WTC11 (cell line): ENCODE measurements at regions of chr19 and their contacts with region 1.

Region 1: GRCh38 chr19:49473868-49474544 is at the start of gene FLT3LG:
- DNase-seq: peak; percentile 67
- ATAC-seq: no peak
- H3K4me3 Mint-ChIP-seq: peak within 1 kb of the TSS; percentile 67
- H3K27ac Mint-ChIP-seq: no peak within 1 kb of the TSS
- H3K4me1 Mint-ChIP-seq: peaks cover 12% of the 10 kb centered on the region
- H3K27me3 Mint-ChIP-seq: peaks cover 17% of the 10 kb centered on the region
- CTCF ChIP-seq: peak; percentile 96
- total RNA-seq, gene FLT3LG: 2.9 to 5.3 TPM (median 3.6 TPM) in 3 replicates

Region 2: DNA sequence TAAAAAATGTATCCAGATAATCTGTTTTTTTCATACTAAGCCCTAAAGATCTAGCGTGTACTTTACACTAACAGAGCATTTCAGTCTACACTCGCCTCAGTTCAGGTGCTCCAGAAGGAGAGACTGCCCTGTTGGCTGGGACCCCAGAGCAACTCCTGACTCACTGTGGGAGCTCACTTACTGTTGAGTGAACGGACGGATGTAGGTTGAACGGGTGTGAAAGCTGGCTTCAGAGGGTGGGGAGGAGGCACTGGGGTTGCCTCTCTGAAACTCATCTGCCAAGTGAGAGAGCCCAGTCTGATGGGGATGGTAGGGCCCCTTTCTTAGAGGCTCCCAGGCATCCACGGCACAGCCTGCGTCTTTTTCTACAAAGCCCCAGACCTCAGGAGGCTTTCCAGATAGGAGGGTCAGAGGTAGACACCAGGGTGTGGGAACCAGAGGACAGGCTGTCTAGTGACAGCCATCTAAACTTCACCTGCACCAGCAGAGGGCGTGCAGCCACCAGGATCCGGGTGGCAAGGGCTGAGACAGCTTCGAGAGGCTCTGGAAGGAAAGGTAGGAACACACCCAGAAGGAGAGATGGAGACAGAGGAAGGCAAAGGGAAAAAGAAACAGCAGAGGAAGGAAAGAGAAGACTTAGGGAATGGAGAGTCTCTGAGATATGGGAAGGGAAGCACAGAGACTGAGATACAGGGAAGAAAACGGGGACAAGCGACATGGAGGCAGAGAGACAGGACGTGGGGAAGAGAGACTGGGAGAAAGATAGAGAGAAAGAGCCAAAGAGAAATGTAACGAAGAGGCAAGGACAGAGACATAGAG is 82.2 kb before region 1 on chr19:
- CTCF ChIA-PET with region 1: interaction called, 10 read pairs
- POLR2A ChIA-PET with region 1: interaction called, 5 read pairs
- DNase-seq: peak; percentile 87
- ATAC-seq: peak; percentile 91
- H3K4me3 Mint-ChIP-seq: no peak overlapping the region
- H3K27ac Mint-ChIP-seq: no peak overlapping the region
- H3K4me1 Mint-ChIP-seq: peaks cover 20% of the 10 kb centered on the region
- H3K27me3 Mint-ChIP-seq: peaks cover 16% of the 10 kb centered on the region
- CTCF ChIP-seq: peak; percentile 58

Region 3: GRCh38 chr19:49415102-49415809 is 58.8 kb before region 1 on chr19:
- CTCF ChIA-PET with region 1: interaction called, 11 read pairs
- POLR2A ChIA-PET with region 1: no interaction called
- DNase-seq: no peak
- ATAC-seq: no peak
- H3K4me3 Mint-ChIP-seq: no peak overlapping the region
- H3K27ac Mint-ChIP-seq: no peak overlapping the region; the same call in 1 of the 2 replicates
- H3K4me1 Mint-ChIP-seq: peaks cover 55% of the 10 kb centered on the region
- H3K27me3 Mint-ChIP-seq: peaks cover 27% of the 10 kb centered on the region
- CTCF ChIP-seq: no peak

Region 4: GRCh38 chr19:49451430-49452181 is 22.4 kb before region 1 on chr19 and contains the start of gene PIH1D1:
- CTCF ChIA-PET with region 1: interaction called, 17 read pairs
- POLR2A ChIA-PET with region 1: interaction called, 7 read pairs
- DNase-seq: peak; percentile 96
- ATAC-seq: peak; percentile 59
- H3K4me3 Mint-ChIP-seq: peak within 1 kb of the TSS; percentile 94
- H3K27ac Mint-ChIP-seq: peak within 1 kb of the TSS; percentile 100
- H3K4me1 Mint-ChIP-seq: peaks cover 36% of the 10 kb centered on the region
- H3K27me3 Mint-ChIP-seq: no peaks in the 10 kb centered on the region
- CTCF ChIP-seq: no peak
- total RNA-seq, gene PIH1D1: 153 to 170 TPM (median 156 TPM) in 3 replicates

Region 5: DNA sequence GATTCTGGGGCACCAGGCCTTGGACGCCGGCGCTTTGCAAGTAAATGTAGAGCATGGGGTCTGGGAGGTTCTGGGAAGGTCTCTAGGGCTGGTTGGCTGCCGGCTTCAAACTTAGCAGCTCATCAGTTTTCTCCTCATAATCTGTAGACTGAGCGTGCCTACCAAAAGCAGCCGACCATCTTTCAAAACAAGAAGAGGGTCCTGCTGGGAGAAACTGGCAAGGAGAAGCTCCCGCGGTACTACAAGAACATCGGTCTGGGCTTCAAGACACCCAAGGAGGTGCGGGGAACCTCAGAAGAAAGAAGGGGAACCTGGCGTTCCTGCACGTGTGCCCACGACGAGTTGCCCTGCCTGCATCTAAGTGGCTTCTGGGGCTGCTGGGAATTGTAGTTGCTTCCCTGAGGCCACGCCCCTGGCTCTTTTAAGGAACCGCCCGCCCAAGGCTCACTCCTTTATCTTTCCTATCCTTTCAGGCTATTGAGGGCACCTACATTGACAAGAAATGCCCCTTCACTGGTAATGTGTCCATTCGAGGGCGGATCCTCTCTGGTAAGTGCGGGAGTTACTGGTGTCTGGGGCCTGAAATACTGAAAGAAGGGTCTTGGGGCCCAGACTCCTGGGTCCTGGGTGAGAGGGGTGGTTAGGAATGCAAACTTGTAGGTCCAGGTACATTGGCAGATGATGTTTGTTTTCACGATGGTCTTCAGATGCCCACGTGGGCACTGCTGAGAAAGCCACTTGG is 23.2 kb after region 1 on chr19:
- CTCF ChIA-PET with region 1: interaction called, 7 read pairs
- POLR2A ChIA-PET with region 1: interaction called, 11 read pairs
- DNase-seq: peak; percentile 52
- ATAC-seq: no peak
- H3K4me3 Mint-ChIP-seq: peak overlapping the region; percentile 97
- H3K27ac Mint-ChIP-seq: peak overlapping the region; percentile 98
- H3K4me1 Mint-ChIP-seq: peaks cover 42% of the 10 kb centered on the region
- H3K27me3 Mint-ChIP-seq: no peaks in the 10 kb centered on the region
- CTCF ChIP-seq: no peak